ENCODE measurements at regions of chr12 and their contacts with region 1.

Region 1: DNA sequence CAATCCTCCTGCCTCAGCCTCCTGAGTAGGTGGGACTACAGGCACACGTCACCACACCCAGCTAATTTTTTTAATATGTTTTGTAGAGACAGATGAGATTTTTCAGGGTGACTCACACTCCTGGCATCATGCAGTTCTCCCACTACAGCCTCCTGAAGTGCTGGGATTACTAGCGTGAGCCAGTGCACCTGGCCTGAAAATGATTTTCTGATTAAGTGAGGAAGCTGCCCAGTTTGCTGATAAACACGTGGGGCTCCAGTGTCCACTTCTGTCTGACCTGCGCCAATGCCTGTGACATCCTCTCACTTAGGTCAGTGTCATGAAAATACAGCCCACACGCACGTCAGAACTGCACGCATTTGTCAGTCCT is 37.0 kb upstream of the SFSWAP start:
- DNase-seq: no peak
- H3K4me3 ChIP-seq: no peak overlapping the region
- H3K27ac ChIP-seq: peak overlapping the region in 1 of 8 donors; percentile 44
- H3K4me1 ChIP-seq: no peaks in the 10 kb centered on the region
- H3K27me3 ChIP-seq: peaks cover 0 to 46% (median 0%) of the 10 kb centered on the region in 7 donors
- CTCF ChIP-seq: no peak
- POLR2A ChIP-seq: no peak

Region 2: DNA sequence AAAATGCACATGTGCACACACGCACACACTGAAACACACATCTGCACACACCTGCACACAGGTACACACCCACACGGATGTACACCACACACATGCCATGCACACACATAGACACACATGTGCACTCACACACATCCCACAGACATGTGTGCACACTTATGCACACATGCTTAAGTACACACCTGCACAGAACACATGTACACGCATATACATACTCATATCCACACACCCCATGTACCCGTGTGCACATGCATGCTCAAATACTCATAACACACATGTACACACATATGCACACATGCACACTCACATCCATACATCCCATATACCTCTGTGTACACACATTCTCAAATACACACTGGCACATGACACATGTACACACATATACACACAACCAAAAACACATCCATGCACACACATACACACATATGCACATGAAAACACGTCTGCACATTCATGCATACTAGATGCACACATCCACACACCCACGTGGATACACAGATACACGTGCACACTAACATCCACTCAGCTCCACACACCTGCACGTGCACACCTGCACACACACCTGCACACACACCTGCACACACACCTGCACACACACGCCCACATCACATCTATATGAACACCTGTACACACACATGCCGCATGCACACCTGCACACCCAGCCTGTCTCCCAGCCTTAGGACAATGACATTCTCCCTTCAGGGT is 383.5 kb before region 1 on chr12:
- intact Hi-C with region 1: loop called (anchors 10 kb)
- DNase-seq: peak; percentile 47
- H3K4me3 ChIP-seq: no peak overlapping the region
- H3K27ac ChIP-seq: no peak overlapping the region
- H3K4me1 ChIP-seq: no peaks in the 10 kb centered on the region
- H3K27me3 ChIP-seq: peaks cover 0 to 9% (median 0%) of the 10 kb centered on the region in 7 donors
- CTCF ChIP-seq: no peak
- POLR2A ChIP-seq: no peak